ENCODE measurements at regions of chr2 and their contacts with region 1.

Region 1: GRCh38 chr2:27890146-27890923 is at the starts of genes BABAM2 and RBKS:
- DNase-seq: peak; percentile 93 to 95 (median 93)
- H3K4me3 ChIP-seq: peak within 1 kb of the TSS; percentile 92 to 99
- H3K4me3 Mint-ChIP-seq: peak within 1 kb of the TSS; percentile 93 to 100 (median 98)
- H3K27ac ChIP-seq: peak within 1 kb of the TSS; percentile 98
- H3K27ac Mint-ChIP-seq: peak within 1 kb of the TSS; percentile 100
- H3K4me1 ChIP-seq: peaks cover 45% of the 10 kb centered on the region
- H3K4me1 Mint-ChIP-seq: peaks cover 24 to 57% (median 47%) of the 10 kb centered on the region in 4 donors
- H3K27me3 ChIP-seq: no peaks in the 10 kb centered on the region
- H3K27me3 Mint-ChIP-seq: peaks cover 1 to 5% of the 10 kb centered on the region in 2 donors
- total RNA-seq, gene BABAM2: 37.3 to 41.2 TPM
- total RNA-seq, gene RBKS: 1.2 to 1.7 TPM

Region 2: DNA sequence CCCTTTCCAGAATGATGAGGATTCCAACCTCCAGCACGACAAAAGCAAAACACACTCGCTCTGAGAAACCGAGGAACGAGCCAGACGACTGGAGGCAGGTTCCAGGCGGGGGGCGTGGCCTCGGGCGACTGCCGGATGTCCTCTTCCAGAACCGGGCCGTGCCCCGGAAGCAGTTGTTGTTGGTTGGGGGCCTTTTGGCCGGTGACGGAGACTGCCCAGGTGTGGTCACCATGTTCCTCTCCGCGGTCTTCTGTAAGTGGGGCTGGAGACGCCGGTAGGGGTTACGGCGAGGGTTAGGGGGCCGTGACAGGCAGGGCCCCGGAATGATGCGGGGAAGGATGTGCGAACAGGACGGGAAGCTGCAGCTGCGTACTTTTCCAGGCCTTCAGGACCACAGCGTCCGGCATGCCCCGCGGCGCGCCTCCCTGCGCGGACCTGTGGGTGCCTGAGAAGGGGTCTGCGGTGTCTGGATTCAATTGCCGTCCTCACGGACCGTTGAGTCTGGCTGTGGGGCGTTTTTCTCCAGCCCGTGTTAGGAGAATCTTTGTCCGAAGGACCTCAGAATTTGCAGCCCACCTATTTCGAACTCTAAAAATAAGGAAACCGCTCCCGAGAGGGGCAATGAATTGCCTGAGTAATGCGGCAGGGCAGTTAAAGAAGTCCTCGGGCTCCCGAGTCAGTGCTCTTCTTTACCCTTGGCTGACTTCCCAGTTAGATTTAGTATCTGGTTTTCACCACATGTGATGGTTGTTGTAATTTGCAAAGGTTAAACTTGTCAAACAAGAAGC is 118.6 kb before region 1 on chr2 and contains the start of gene MRPL33:
- CTCF ChIA-PET with region 1: no interaction called
- POLR2A ChIA-PET with region 1: interaction called, 7 read pairs
- intact Hi-C with region 1: loop called (anchors 1 kb)
- DNase-seq: peak; percentile 89 to 91 (median 89)
- H3K4me3 ChIP-seq: peak within 1 kb of the TSS; percentile 78
- H3K4me3 Mint-ChIP-seq: peak within 1 kb of the TSS; percentile 98 to 100 (median 99)
- H3K27ac ChIP-seq: peak within 1 kb of the TSS; percentile 86
- H3K27ac Mint-ChIP-seq: peak within 1 kb of the TSS; percentile 98 to 100 (median 100)
- H3K4me1 ChIP-seq: peaks cover 30% of the 10 kb centered on the region
- H3K4me1 Mint-ChIP-seq: peaks cover 31 to 56% (median 46%) of the 10 kb centered on the region in 4 donors
- H3K27me3 ChIP-seq: no peaks in the 10 kb centered on the region
- H3K27me3 Mint-ChIP-seq: peaks cover 0 to 2% of the 10 kb centered on the region in 2 donors
- total RNA-seq, gene MRPL33: 36.2 to 43.4 TPM

Region 3: GRCh38 chr2:27966483-27966882 is 76.1 kb after region 1 on chr2:
- CTCF ChIA-PET with region 1: no interaction called
- POLR2A ChIA-PET with region 1: interaction called, 10 read pairs
- intact Hi-C with region 1: loop called (anchors 1 kb)
- DNase-seq: no peak
- H3K4me3 ChIP-seq: peak overlapping the region in 1 of 2 donors; percentile 6
- H3K4me3 Mint-ChIP-seq: peak overlapping the region in 6 of 8 donors; percentile 29 to 76 (median 72)
- H3K27ac ChIP-seq: peak overlapping the region; percentile 32
- H3K27ac Mint-ChIP-seq: peak overlapping the region; percentile 84 to 98 (median 93)
- H3K4me1 ChIP-seq: peaks cover 22% of the 10 kb centered on the region
- H3K4me1 Mint-ChIP-seq: peaks cover 21 to 53% (median 42%) of the 10 kb centered on the region in 4 donors
- H3K27me3 ChIP-seq: no peaks in the 10 kb centered on the region
- H3K27me3 Mint-ChIP-seq: no peaks in the 10 kb centered on the region

Region 4: GRCh38 chr2:28406276-28407096 is 516.2 kb after region 1 on chr2:
- CTCF ChIA-PET with region 1: no interaction called
- POLR2A ChIA-PET with region 1: interaction called, 4 read pairs
- intact Hi-C with region 1: loop called (anchors 1 kb)
- DNase-seq: peak; percentile 70 to 90 (median 75)
- H3K4me3 ChIP-seq: no peak overlapping the region
- H3K4me3 Mint-ChIP-seq: peak overlapping the region; percentile 2 to 73 (median 54)
- H3K27ac ChIP-seq: peak overlapping the region; percentile 34
- H3K27ac Mint-ChIP-seq: peak overlapping the region; percentile 87 to 100 (median 96)
- H3K4me1 ChIP-seq: peaks cover 78% of the 10 kb centered on the region
- H3K4me1 Mint-ChIP-seq: peaks cover 53 to 91% (median 76%) of the 10 kb centered on the region in 4 donors
- H3K27me3 ChIP-seq: no peaks in the 10 kb centered on the region
- H3K27me3 Mint-ChIP-seq: no peaks in the 10 kb centered on the region

Region 5: DNA sequence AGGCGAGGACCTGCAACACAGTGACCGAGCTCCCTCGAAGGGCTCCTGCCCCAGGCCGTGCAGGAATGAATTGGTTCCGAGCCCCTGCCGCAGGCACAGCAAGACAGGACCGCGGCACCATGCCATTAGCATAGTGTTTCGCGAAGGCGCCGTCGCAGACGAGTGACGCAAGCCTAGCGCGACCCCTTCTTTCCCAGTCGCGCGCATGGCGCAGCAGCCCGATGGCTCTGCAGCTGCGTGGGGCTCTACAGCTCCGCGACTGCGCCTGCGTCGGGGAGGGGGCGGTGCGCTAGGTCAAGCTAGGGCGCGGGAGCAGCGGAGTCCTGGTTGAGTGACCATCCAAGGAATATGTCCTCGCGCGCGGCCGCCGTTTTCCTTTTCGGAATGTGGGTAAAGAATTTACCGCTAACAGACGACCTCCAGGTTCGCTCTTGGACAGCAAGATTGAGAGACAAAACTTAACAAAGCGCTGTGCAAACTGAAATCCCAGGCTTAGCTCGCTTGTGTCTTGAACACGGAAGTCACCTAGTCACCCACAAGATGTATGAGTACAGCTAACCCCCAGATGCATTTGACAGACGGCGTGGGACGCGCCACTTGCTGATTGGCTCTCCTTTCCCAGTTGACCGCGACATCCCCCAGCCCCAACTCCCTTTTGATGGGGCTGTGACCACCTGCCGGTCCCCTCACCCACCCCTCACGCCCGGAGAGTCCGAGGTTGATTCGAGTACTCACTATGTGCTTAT is 980.0 kb after region 1 on chr2 and contains the start of gene TRMT61B:
- CTCF ChIA-PET with region 1: no interaction called
- POLR2A ChIA-PET with region 1: no interaction called
- intact Hi-C with region 1: no loop called
- DNase-seq: peak; percentile 95 to 96 (median 96)
- H3K4me3 ChIP-seq: peak within 1 kb of the TSS; percentile 99
- H3K4me3 Mint-ChIP-seq: peak within 1 kb of the TSS; percentile 93 to 100 (median 96)
- H3K27ac ChIP-seq: peak within 1 kb of the TSS; percentile 95
- H3K27ac Mint-ChIP-seq: peak within 1 kb of the TSS; percentile 98 to 100 (median 100)
- H3K4me1 ChIP-seq: peaks cover 39% of the 10 kb centered on the region
- H3K4me1 Mint-ChIP-seq: peaks cover 20 to 46% (median 31%) of the 10 kb centered on the region in 4 donors
- H3K27me3 ChIP-seq: no peaks in the 10 kb centered on the region
- H3K27me3 Mint-ChIP-seq: peaks cover 0 to 2% of the 10 kb centered on the region in 2 donors
- total RNA-seq, gene TRMT61B: 17.4 TPM

Measured in CD4-positive, alpha-beta memory T cell (primary cell).